ENCODE measurements at regions of chr21 and their contacts with region 1.

Region 1: DNA sequence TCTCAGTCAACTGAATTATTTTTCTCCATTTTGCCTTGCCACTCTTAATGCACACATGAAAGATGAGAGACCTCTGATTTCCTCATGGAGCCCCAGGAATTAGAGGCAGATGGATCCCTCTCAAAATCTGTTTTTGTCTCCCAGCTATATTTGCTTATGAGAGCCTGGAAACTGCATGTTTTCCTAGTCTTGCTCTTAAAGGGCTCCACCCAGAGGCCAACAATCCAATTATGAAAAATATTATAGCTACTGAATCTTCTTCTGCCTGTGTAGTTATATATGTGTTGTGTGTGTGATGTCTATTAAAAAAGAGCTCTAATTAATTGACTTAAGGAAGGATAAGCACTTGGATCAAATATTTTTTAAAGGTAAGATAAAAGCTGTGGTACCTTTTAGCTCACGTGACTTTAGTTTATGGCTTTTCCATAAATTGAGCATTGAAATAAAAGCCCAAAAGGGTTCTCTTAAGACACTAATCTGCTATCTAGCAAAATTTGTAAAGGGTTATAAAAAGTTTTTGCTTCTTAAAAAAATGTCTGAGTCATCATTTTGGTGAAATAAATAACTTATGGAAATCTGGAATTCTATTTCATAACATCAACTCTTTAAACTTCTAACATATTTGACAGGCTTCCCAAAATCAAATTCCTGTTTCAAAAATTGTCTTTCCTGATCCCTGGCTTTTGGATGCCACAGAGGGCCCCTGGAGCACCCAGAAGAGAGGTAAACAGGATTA is 31.2 kb upstream of the TSPEAR start:
- DNase-seq: peak in 2 of 35 experiments; percentile 15 to 64
- ATAC-seq: peak in 3 of 4 experiments; percentile 33 to 43 (median 37)
- H3K4me3 ChIP-seq: no peak overlapping the region
- H3K4me3 Mint-ChIP-seq: no peak overlapping the region
- H3K27ac ChIP-seq: no peak overlapping the region
- H3K27ac Mint-ChIP-seq: peak overlapping the region; percentile 24 to 62
- H3K4me1 ChIP-seq: no peaks in the 10 kb centered on the region
- H3K4me1 Mint-ChIP-seq: peaks cover 3 to 6% (median 4%) of the 10 kb centered on the region in 3 donors
- H3K27me3 ChIP-seq: peaks cover 0 to 5% of the 10 kb centered on the region in 2 experiments
- H3K27me3 Mint-ChIP-seq: peaks cover 0 to under 1% of the 10 kb centered on the region in 2 donors

Region 2: DNA sequence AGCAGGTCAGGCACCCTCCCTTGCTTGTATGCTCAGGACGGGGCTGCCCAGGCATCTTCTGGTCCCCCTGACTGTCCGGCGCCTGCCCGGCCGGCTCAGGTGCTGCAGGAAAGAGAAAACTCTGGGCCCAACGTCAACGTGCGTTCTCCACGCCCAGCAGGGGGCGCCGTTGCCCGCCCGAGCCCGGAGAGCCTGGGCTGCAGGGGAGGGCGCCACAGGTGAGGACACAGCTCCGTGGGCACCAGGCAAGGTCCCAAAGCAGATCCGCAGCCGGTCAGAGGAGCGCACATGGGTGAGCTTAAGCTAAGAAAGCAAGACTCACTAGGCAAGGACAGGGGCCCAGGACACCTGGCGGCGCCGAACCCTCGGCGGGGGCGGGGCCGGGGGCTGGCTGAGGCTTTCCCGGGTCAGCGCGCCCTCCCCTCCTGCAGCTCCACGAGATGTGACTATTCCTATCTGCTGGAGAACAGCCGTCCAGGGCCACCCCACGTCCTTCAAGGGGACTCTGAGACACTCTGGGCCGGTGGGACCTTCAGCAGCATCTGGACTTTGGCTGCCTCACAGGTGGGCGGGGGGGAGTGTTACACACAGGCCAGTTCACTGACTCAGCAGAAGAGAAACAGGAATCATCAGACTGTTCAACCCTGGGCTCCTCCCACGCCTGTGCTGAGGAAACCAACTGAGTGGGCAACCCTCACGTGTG is 231.9 kb before region 1 on chr21:
- CTCF ChIA-PET with region 1: interaction called, 12 to 33 read pairs
- POLR2A ChIA-PET with region 1: no interaction called
- DNase-seq: peak; percentile 49 to 91 (median 77)
- ATAC-seq: peak; percentile 85 to 97 (median 92)
- H3K4me3 ChIP-seq: peak overlapping the region; percentile 48 to 53
- H3K4me3 Mint-ChIP-seq: peak overlapping the region; percentile 39 to 55 (median 46)
- H3K27ac ChIP-seq: no peak overlapping the region
- H3K27ac Mint-ChIP-seq: no peak overlapping the region
- H3K4me1 ChIP-seq: peaks cover 0 to 16% of the 10 kb centered on the region in 2 experiments
- H3K4me1 Mint-ChIP-seq: peaks cover 0 to 6% (median 4%) of the 10 kb centered on the region in 3 donors
- H3K27me3 ChIP-seq: peaks cover 0 to 30% of the 10 kb centered on the region in 2 experiments
- H3K27me3 Mint-ChIP-seq: no peaks in the 10 kb centered on the region

Region 3: DNA sequence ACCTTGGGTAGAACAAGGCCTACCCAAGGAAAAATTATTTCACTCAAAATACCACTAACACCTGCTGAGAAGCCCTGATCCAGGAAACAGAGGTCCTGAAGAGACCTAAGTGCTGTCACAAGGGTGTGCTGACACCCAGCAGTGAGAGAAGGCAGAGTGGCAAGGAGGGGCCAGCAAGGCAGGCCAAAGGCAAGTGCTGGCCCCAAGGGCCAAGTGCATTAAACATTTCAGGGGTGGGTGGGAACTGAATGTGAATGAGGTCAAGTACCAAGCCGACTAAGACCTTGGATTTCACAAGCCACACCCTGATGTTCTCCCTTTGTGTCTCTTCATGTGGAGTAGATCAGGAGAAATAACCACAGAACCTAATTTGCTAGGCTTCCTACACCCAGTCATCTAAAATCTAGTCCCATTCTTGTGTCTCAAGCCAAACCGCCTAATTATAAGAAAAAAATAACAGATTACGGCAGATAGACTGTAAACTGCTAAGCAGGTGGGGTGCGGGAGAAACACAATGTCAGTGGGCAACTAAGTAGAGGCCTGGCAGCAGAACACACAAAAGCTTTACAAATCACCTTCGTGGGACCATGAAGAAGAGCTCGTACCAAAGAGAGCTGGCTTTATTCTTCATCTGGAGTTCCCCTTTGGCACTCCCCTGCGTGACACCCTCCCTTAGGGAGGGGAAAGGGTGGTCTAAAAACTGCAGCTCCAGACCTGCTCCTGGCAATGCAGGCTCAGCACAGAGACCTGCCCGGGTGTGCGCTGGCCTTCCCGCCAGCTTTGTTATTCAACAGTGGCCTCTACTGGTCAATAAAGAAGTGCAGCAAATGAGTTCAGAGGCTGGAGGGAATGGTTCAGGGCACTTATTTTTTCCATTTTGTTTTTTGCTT is 50.4 kb after region 1 on chr21:
- CTCF ChIA-PET with region 1: interaction called, 4 to 16 read pairs
- POLR2A ChIA-PET with region 1: no interaction called
- DNase-seq: peak; percentile 16 to 72 (median 42)
- ATAC-seq: peak; percentile 90 to 95 (median 92)
- H3K4me3 ChIP-seq: no peak overlapping the region
- H3K4me3 Mint-ChIP-seq: no peak overlapping the region
- H3K27ac ChIP-seq: no peak overlapping the region
- H3K27ac Mint-ChIP-seq: peak overlapping the region in 1 of 2 donors; percentile 15
- H3K4me1 ChIP-seq: peaks cover 0 to 10% of the 10 kb centered on the region in 2 experiments
- H3K4me1 Mint-ChIP-seq: peaks cover 49 to 59% (median 59%) of the 10 kb centered on the region in 3 donors
- H3K27me3 ChIP-seq: no peaks in the 10 kb centered on the region
- H3K27me3 Mint-ChIP-seq: no peaks in the 10 kb centered on the region

Region 4: GRCh38 chr21:45019076-45019956 is 276.7 kb after region 1 on chr21:
- CTCF ChIA-PET with region 1: no interaction called
- POLR2A ChIA-PET with region 1: no interaction called
- DNase-seq: no peak
- ATAC-seq: peak in 1 of 4 experiments; percentile 28
- H3K4me3 ChIP-seq: peak overlapping the region in 1 of 2 donors; percentile 12
- H3K4me3 Mint-ChIP-seq: peak overlapping the region; percentile 24 to 49 (median 36)
- H3K27ac ChIP-seq: no peak overlapping the region
- H3K27ac Mint-ChIP-seq: no peak overlapping the region
- H3K4me1 ChIP-seq: peaks cover 0 to 7% of the 10 kb centered on the region in 2 experiments
- H3K4me1 Mint-ChIP-seq: peaks cover 6 to 8% (median 8%) of the 10 kb centered on the region in 3 donors
- H3K27me3 ChIP-seq: peaks cover 0 to 70% of the 10 kb centered on the region in 2 experiments
- H3K27me3 Mint-ChIP-seq: peaks cover 20 to 45% of the 10 kb centered on the region in 2 donors